A549 (cell line): ENCODE measurements at regions of chr11 and their contacts with region 1.

Region 1: DNA sequence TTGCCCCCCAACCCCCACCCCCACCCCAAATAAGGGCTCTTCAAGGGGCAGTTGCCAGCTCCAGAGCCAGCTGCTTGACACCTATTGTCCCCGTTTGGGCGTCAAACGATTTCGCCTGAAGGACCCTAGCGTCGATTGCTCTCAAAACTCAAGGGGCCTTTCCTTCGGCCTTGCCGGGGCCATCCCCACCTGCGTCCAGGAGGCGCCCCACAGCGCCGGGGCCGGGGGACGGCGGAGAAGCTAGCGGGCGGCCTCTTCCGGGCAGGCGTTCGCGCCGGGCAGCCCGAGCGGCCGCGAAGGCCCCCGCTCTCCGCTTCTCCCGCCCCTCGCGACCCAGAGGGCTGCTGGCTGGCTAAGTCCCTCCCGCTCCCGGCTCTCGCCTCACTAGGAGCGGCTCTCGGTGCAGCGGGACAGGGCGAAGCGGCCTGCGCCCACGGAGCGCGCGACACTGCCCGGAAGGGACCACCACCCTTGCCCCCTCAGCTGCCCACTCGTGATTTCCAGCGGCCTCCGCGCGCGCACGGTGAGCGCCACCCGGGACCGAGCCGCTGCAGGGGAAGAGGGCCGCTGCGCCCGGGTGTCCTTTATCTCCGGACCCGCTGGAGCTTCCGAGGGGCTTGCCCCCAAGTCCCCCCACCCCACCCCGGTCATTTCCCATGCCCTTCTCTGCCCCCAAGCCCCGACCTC is at the start of gene CAPRIN1:
- DNase-seq: peak; percentile 89 to 94
- ATAC-seq: peak; percentile 81 to 91
- H3K4me3 ChIP-seq: peak within 1 kb of the TSS; percentile 91
- H3K27ac ChIP-seq: peak within 1 kb of the TSS; percentile 98 to 100
- H3K4me1 ChIP-seq: peaks cover 32% of the 10 kb centered on the region
- CTCF ChIP-seq: no peak
- EP300 ChIP-seq: peak in 1 of 2 experiments; percentile 36; a peak in 1 of 5 replicates
- POLR2A ChIP-seq: peak; percentile 75
- RAD21 ChIP-seq: no peak
- polyA plus RNA-seq, gene CAPRIN1: 224 and 255 TPM in 2 replicates

Region 2: GRCh38 chr11:34091825-34092224 is 40.3 kb after region 1 on chr11:
- CTCF ChIA-PET with region 1: no interaction called
- POLR2A ChIA-PET with region 1: no interaction called
- DNase-seq: no peak
- ATAC-seq: no peak
- H3K4me3 ChIP-seq: no peak overlapping the region
- H3K27ac ChIP-seq: no peak overlapping the region
- H3K4me1 ChIP-seq: no peaks in the 10 kb centered on the region
- CTCF ChIP-seq: no peak
- EP300 ChIP-seq: no peak
- POLR2A ChIP-seq: no peak
- RAD21 ChIP-seq: no peak

Region 3: DNA sequence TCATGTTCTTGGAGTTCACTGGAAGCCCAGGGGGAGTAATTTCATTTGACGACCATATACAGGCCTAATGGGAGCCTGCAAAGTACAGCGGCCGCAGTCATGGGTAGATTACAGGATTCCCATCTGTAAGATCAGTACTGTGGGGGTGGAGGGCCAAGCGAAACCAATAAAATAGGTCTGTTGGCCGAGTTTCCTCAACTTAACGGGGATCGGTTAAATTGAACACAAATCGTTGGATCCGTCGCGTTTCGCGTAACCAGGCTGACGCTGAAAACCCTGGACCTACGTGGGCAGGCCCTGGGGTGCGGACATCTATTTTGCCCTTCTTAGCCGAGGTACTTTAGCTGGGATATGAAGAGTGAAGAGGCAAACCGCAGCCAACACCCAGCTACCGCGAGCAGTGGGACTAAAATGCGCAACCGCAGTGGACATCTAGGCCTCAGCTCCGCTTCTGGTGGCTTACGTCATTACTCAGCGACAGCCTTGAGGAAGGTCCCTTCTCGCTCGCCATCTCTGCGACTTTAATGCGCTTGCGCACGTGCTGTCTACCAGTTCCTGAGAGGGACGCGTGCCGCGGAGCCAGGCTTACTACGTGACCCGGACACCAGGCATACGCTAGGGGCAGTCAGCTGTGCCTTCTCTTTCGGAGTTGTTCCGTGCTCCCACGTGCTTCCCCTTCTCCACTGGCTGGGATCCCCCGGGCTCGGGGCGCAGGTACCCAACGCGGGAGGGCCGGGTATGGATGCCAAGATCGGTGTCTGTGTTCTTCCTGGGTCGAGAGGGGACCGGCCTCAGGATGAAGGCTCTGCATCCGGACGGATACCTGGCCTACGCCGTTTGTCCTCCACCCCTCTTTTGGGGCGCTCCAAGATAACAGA is 53.8 kb after region 1 on chr11 and contains the start of gene NAT10:
- CTCF ChIA-PET with region 1: no interaction called
- POLR2A ChIA-PET with region 1: interaction called, 11 read pairs
- DNase-seq: peak; percentile 95 to 99
- ATAC-seq: peak; percentile 93
- H3K4me3 ChIP-seq: peak within 1 kb of the TSS; percentile 92
- H3K27ac ChIP-seq: peak within 1 kb of the TSS; percentile 84 to 95
- H3K4me1 ChIP-seq: peaks cover 13% of the 10 kb centered on the region; the same call in 2 of the 3 replicates
- CTCF ChIP-seq: no peak
- EP300 ChIP-seq: 0 out of 5 replicates have a peak, but pooled peaks of 1 of the 2 experiments have one; percentile 14
- POLR2A ChIP-seq: peak; percentile 87
- RAD21 ChIP-seq: 0 out of 5 replicates have a peak, but pooled peaks of 1 of the 2 experiments have one; percentile 5
- polyA plus RNA-seq, gene NAT10: 57.1 and 59.3 TPM in 2 replicates